ENCODE measurements at regions of chr5 and their contacts with region 1.

Region 1: DNA sequence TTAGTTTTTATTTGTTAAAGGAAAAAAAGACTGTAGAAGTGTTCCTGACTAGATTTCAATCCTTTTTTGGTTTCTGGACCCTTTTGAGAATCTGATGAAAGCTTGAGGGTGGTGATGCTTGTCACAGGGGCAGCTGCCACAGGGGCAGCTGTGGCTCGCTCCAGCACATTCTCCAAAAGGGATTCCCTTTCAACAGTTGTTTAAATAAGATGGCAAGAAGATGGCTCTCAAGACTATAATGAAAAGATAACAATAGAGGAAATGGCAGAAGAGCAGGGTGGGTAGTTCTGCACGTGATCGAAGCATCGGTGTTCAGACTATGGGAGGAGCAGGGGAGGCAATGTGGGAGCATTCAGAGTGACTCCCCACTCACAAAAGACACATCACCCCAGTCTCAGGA is 46.5 kb upstream of the TNFAIP8 start:
- DNase-seq: peak; percentile 48
- ATAC-seq: peak; percentile 31
- H3K4me3 ChIP-seq: peak overlapping the region in 3 of 5 experiments; percentile 1 to 46 (median 1)
- H3K4me3 Mint-ChIP-seq: peak overlapping the region; percentile 83
- H3K27ac ChIP-seq: peak overlapping the region; percentile 67 to 88
- H3K27ac Mint-ChIP-seq: peak overlapping the region; percentile 96
- H3K4me1 ChIP-seq: peaks cover 85 to 99% of the 10 kb centered on the region in 2 donors
- H3K4me1 Mint-ChIP-seq: peaks cover 89% of the 10 kb centered on the region
- H3K27me3 ChIP-seq: no peaks in the 10 kb centered on the region
- H3K27me3 Mint-ChIP-seq: no peaks in the 10 kb centered on the region
- CTCF ChIP-seq: no peak

Region 2: GRCh38 chr5:119290161-119290569 is 19.2 kb before region 1 on chr5:
- CTCF ChIA-PET with region 1: interaction called, 9 read pairs
- POLR2A ChIA-PET with region 1: interaction called, 5 read pairs
- intact Hi-C with region 1: loop called (anchors 2 kb)
- DNase-seq: peak; percentile 78
- ATAC-seq: peak; percentile 88
- H3K4me3 ChIP-seq: peak overlapping the region in 3 of 5 experiments; percentile 13 to 20 (median 18)
- H3K4me3 Mint-ChIP-seq: peak overlapping the region; percentile 65
- H3K27ac ChIP-seq: peak overlapping the region; percentile 35 to 74
- H3K27ac Mint-ChIP-seq: peak overlapping the region; percentile 90
- H3K4me1 ChIP-seq: peaks cover 70 to 76% of the 10 kb centered on the region in 2 donors
- H3K4me1 Mint-ChIP-seq: peaks cover 83% of the 10 kb centered on the region
- H3K27me3 ChIP-seq: no peaks in the 10 kb centered on the region
- H3K27me3 Mint-ChIP-seq: no peaks in the 10 kb centered on the region
- CTCF ChIP-seq: no peak

Region 3: DNA sequence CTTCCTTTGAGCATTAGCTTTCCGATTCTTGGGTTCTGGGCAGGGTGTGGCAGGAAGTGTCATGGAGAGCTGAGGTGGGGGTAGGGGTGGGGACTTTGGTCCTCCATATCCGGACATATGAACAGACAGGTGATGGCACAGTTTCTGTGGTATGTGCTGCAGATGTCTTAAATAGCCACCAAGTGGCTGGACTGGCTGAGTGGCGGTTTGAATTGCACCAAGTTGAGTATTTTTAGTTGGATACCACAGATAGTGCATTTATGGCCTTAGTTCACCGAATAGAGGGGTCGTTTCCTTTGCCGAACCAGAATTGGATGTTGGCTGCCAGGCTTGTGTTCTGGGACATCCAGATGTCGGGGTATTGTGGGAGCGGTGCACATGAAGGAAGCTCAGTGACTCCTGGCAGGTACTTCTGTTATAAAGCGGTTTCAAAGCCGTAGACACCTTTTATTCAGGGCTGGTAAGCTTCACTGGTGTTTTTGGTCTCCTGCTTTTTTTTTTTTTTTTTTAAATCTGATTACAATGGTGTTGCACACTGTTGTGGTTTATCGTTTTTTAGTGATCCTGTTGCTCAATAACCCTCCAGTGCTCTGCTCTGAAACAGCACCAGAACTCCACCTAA is 31.4 kb after region 1 on chr5:
- CTCF ChIA-PET with region 1: interaction called, 17 read pairs
- POLR2A ChIA-PET with region 1: interaction called, 3 read pairs
- intact Hi-C with region 1: loop called (anchors 5 kb)
- DNase-seq: peak; percentile 68
- ATAC-seq: peak; percentile 22
- H3K4me3 ChIP-seq: peak overlapping the region in 4 of 5 experiments; percentile 5 to 45 (median 22)
- H3K4me3 Mint-ChIP-seq: peak overlapping the region; percentile 85
- H3K27ac ChIP-seq: peak overlapping the region; percentile 87 to 91
- H3K27ac Mint-ChIP-seq: peak overlapping the region; percentile 95
- H3K4me1 ChIP-seq: peaks cover 95 to 96% of the 10 kb centered on the region in 2 donors
- H3K4me1 Mint-ChIP-seq: peaks cover 94% of the 10 kb centered on the region
- H3K27me3 ChIP-seq: no peaks in the 10 kb centered on the region
- H3K27me3 Mint-ChIP-seq: no peaks in the 10 kb centered on the region
- CTCF ChIP-seq: no peak

Region 4: GRCh38 chr5:119347991-119348390 is 38.7 kb after region 1 on chr5:
- CTCF ChIA-PET with region 1: no interaction called
- POLR2A ChIA-PET with region 1: interaction called, 11 read pairs
- intact Hi-C with region 1: loop called (anchors 5 kb)
- DNase-seq: no peak
- ATAC-seq: no peak
- H3K4me3 ChIP-seq: no peak overlapping the region
- H3K4me3 Mint-ChIP-seq: peak overlapping the region; percentile 18
- H3K27ac ChIP-seq: peak overlapping the region in 1 of 2 donors; percentile 54
- H3K27ac Mint-ChIP-seq: peak overlapping the region; percentile 80
- H3K4me1 ChIP-seq: peaks cover 92 to 95% of the 10 kb centered on the region in 2 donors
- H3K4me1 Mint-ChIP-seq: peaks cover 92% of the 10 kb centered on the region
- H3K27me3 ChIP-seq: no peaks in the 10 kb centered on the region
- H3K27me3 Mint-ChIP-seq: no peaks in the 10 kb centered on the region
- CTCF ChIP-seq: no peak

Region 5: GRCh38 chr5:119389288-119390030 is 80.1 kb after region 1 on chr5:
- CTCF ChIA-PET with region 1: no interaction called
- POLR2A ChIA-PET with region 1: interaction called, 7 read pairs
- intact Hi-C with region 1: loop called (anchors 2 kb)
- DNase-seq: no peak
- ATAC-seq: peak; percentile 17
- H3K4me3 ChIP-seq: peak overlapping the region in 1 of 5 experiments; percentile 16
- H3K4me3 Mint-ChIP-seq: peak overlapping the region; percentile 48
- H3K27ac ChIP-seq: peak overlapping the region; percentile 45 to 71
- H3K27ac Mint-ChIP-seq: peak overlapping the region; percentile 78
- H3K4me1 ChIP-seq: peaks cover 83 to 91% of the 10 kb centered on the region in 2 donors
- H3K4me1 Mint-ChIP-seq: peaks cover 90% of the 10 kb centered on the region
- H3K27me3 ChIP-seq: no peaks in the 10 kb centered on the region
- H3K27me3 Mint-ChIP-seq: no peaks in the 10 kb centered on the region
- CTCF ChIP-seq: no peak